OCI-LY7 (cell line): ENCODE measurements at regions of chr1 and their contacts with region 1.

Region 1: DNA sequence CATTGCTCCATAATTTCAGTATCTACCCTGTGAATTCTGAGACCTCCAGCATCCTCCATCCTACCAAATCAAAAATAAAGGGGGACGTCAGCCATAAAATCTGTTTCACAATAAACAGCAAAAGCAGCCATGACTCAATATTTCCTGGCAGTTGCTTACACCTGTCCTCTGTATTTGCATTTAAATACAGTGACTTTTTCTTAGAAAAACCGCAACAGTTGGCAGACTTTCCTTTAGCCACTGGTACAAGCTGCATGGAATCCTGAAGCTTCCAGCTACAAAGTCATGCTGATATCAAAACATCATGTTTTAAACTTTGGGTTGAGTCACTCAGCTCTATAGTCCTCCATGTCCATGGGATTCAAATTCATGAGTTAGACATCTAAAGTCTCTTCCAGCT is 278.0 kb upstream of the KAZN start:
- DNase-seq: peak; percentile 96
- H3K4me3 ChIP-seq: peak overlapping the region; percentile 48
- H3K27ac ChIP-seq: peak overlapping the region; percentile 97
- H3K4me1 ChIP-seq: peaks cover 75% of the 10 kb centered on the region
- CTCF ChIP-seq: no peak

Region 2: DNA sequence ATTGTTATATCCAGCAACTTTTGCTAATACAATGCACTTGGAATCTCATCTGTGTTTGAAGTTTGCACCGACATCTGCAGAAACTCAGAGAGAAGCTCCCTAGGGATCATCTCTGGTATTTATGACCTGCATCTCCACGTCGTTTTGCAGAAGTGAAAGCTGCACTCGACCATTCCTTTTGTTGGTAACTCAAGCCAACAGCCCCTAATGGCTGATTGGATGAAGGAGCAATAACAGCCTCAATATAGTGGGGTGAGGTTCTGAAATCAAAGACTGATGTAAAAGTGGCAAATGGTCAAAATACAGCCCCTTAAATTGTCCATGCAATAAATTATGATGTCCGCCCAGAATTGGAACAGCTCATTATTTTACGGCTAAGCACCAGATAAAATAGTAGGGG is 66.3 kb before region 1 on chr1:
- CTCF ChIA-PET with region 1: interaction called, 5 read pairs
- POLR2A ChIA-PET with region 1: interaction called, 5 read pairs
- intact Hi-C with region 1: loop called (anchors 1 kb)
- DNase-seq: peak; percentile 99
- H3K4me3 ChIP-seq: peak overlapping the region; percentile 48
- H3K27ac ChIP-seq: peak overlapping the region; percentile 95
- H3K4me1 ChIP-seq: peaks cover 81% of the 10 kb centered on the region
- CTCF ChIP-seq: no peak

Region 3: DNA sequence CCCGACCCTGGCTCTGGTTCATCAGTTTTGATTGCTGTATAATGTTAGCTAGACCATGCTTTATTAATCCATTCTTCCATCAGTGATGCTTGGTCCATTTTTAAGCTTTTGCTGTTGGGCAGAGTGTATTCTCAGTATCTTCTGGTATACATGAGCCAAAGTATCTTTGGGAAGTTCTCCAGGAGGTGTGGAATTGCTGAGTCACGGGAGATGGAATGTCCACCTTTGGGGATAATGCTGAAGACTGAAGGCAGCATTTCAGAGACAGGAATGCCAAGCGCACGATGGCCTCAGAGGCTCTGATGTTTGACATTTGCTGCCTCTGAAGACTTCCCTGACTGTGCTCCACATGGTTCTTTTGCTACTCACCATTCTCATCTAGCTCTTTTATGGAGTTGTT is 11.6 kb after region 1 on chr1:
- CTCF ChIA-PET with region 1: no interaction called
- POLR2A ChIA-PET with region 1: interaction called, 10 read pairs
- intact Hi-C with region 1: no loop called
- DNase-seq: no peak
- H3K4me3 ChIP-seq: no peak overlapping the region
- H3K27ac ChIP-seq: peak overlapping the region; percentile 46
- H3K4me1 ChIP-seq: peaks cover 52% of the 10 kb centered on the region
- CTCF ChIP-seq: no peak